PC-3 (cell line): ENCODE measurements at regions of chr7 and their contacts with region 1.

Region 1: DNA sequence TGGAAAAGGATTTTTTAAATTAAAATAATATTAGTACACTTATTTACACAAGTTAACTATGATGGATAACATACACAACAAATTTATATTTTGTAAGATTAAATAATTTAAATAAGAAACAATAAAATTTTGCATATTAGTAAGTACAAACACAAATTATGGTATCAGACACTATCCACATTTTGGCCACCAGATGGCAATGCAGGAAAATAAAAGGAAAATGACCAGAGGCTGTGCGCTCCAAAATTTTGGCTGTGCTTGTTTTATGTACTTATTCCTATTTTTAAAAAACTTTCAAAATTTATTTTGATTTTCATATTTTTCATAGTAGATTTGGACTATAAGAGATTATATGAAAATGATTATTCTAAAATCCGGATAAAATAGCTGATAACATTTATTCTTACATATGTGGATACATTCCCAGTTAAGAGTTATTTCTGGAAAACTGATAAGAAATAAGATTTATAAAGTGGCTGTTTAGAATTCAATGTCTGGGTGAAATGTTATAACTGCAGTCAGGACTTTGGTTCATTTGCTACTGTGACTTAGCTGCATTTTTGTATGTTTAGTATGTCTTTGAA is 274.7 kb upstream of the HGF start:
- DNase-seq: peak; percentile 66
- ATAC-seq: peak; percentile 45; the same call in 1 of the 2 replicates
- H3K4me3 ChIP-seq: no peak overlapping the region
- H3K27ac ChIP-seq: no peak overlapping the region
- H3K4me1 ChIP-seq: peaks cover 10% of the 10 kb centered on the region
- H3K27me3 ChIP-seq: no peaks in the 10 kb centered on the region
- CTCF ChIP-seq: peak; percentile 62

Region 2: DNA sequence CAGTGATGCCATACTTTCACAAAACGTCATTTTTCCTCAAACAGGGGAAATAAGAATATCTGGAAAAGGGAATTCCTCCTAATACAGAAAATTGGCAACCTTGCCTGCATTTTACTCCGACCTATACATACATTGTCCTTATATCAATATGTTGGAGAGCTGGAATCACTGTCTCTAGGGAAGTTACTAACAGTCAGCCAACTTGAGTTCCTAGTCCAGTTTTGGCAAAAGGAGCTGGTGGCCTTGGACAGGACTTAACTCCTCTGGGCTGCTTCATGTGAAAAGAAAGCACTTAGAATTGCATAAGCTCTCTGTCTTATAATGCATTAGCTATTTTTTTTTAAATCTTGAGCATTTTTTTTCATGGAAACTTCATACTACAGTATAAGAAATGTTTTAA is 100.5 kb before region 1 on chr7:
- CTCF ChIA-PET with region 1: no interaction called
- POLR2A ChIA-PET with region 1: no interaction called
- intact Hi-C with region 1: no loop called
- DNase-seq: no peak
- ATAC-seq: no peak
- H3K4me3 ChIP-seq: no peak overlapping the region
- H3K27ac ChIP-seq: no peak overlapping the region
- H3K4me1 ChIP-seq: no peaks in the 10 kb centered on the region
- H3K27me3 ChIP-seq: 0 out of 2 replicates have a peak, but pooled peaks cover 3% of the 10 kb centered on the region
- CTCF ChIP-seq: no peak

Region 3: DNA sequence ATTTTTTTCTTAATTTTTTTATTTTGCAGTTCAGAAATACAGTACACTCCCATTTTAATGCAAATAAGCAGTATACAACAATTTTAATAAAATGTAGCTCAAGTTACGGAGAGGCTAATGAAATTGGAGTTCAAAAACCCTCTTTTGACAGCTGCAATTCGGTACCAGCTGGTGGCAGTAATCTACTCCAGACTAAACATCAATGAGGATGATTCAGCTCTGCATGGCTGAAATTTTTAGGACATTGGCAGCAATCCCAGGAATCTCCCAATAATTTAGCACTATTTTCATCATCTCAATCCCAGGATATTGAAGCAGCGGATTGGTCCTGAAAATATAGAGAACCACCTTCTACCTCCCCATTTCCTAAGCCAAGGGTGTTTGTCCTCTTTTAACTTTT is 120.2 kb after region 1 on chr7:
- CTCF ChIA-PET with region 1: no interaction called
- POLR2A ChIA-PET with region 1: no interaction called
- intact Hi-C with region 1: loop called (anchors 2 kb)
- DNase-seq: peak; percentile 58
- ATAC-seq: peak; percentile 64
- H3K4me3 ChIP-seq: no peak overlapping the region
- H3K27ac ChIP-seq: no peak overlapping the region
- H3K4me1 ChIP-seq: no peaks in the 10 kb centered on the region
- H3K27me3 ChIP-seq: peaks cover 65% of the 10 kb centered on the region
- CTCF ChIP-seq: peak; percentile 59

Region 4: GRCh38 chr7:82234457-82235049 is 190.0 kb after region 1 on chr7:
- CTCF ChIA-PET with region 1: interaction called, 6 read pairs
- POLR2A ChIA-PET with region 1: no interaction called
- intact Hi-C with region 1: loop called (anchors 5 kb)
- DNase-seq: peak; percentile 60
- ATAC-seq: no peak
- H3K4me3 ChIP-seq: no peak overlapping the region
- H3K27ac ChIP-seq: no peak overlapping the region
- H3K4me1 ChIP-seq: no peaks in the 10 kb centered on the region
- H3K27me3 ChIP-seq: peaks cover 37% of the 10 kb centered on the region
- CTCF ChIP-seq: peak; percentile 77

Region 5: GRCh38 chr7:82275342-82275741 is 230.8 kb after region 1 on chr7:
- CTCF ChIA-PET with region 1: no interaction called
- POLR2A ChIA-PET with region 1: no interaction called
- intact Hi-C with region 1: no loop called
- DNase-seq: no peak
- ATAC-seq: no peak
- H3K4me3 ChIP-seq: no peak overlapping the region
- H3K27ac ChIP-seq: no peak overlapping the region
- H3K4me1 ChIP-seq: no peaks in the 10 kb centered on the region
- H3K27me3 ChIP-seq: 0 out of 2 replicates have a peak, but pooled peaks cover 9% of the 10 kb centered on the region
- CTCF ChIP-seq: no peak

Region 6: DNA sequence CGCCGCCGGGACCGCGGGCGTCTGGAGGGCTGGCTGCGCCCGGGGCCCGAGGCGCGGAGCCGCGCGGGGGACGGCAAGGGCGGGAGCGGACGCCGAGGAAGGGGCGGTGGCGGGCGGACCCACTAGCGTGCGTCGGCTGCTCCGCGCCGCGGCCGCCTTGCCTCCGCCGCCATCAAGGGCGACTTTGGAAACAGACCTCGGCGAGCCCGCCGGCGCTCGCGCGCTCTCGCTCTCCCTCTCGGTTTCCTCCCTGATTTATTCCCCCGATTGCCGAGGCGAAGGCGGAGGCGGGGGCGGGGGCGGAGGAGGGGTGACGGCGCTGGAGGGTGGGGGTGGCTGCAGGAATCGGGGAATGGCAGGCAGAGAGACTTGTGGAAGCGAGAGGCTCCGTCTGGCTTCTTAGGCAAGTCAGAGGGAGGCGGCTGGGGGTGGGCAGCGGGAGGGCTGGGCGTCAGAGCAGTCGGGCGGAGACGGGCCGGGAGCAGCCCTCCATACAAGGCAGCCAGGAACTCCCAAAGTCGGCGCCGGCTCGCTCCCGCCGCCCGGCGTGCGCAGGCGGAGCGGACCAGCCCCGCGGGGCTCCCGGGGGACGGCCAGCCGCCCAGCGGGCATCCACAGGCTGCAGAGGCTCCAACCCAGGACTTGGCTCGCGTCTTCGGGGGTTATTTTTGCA is 399.1 kb after region 1 on chr7 and contains the start of gene CACNA2D1:
- CTCF ChIA-PET with region 1: no interaction called
- POLR2A ChIA-PET with region 1: no interaction called
- intact Hi-C with region 1: loop called (anchors 10 kb)
- DNase-seq: peak; percentile 5
- ATAC-seq: peak; percentile 67
- H3K4me3 ChIP-seq: peak within 1 kb of the TSS; percentile 66
- H3K27ac ChIP-seq: no peak within 1 kb of the TSS
- H3K4me1 ChIP-seq: peaks cover 7% of the 10 kb centered on the region; the same call in 1 of the 2 replicates
- H3K27me3 ChIP-seq: peaks cover 68% of the 10 kb centered on the region
- CTCF ChIP-seq: no peak
- total RNA-seq, gene CACNA2D1: 0.77 and 1.1 TPM in 2 replicates

Region 7: DNA sequence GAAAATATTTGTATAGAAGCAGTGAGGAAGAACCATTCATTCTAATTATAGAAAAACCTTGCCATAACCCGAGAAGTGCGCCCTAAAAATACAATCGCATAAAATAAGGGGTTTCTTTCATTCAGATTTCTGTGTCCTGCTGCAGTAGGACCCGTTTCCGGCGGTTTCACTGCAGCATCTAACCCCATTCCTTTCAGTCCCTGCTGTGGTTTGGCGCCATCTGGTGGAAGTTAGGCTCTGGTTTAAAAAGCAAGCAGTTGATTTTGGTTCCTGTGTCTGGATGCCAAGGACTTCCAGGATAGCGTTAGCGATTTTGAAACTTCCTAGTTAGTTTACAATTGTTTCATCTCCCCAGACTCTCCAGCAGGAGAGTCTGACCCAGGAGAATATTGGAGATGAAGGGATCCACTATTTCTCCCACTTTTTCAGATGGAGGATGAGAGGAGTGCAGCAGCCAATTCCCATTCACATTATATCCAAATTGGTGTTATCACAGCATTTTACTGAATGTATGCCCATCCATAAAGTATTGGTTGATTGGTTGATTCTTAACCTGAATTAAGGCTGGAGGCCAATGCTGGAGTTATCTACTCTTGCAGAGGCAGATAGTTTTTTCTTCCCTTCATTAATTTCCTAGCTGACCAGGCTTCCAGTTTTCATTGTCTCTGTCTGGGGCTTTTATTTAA is 527.7 kb after region 1 on chr7:
- CTCF ChIA-PET with region 1: no interaction called
- POLR2A ChIA-PET with region 1: no interaction called
- intact Hi-C with region 1: loop called (anchors 1 kb)
- DNase-seq: peak; percentile 86
- ATAC-seq: peak; percentile 91
- H3K4me3 ChIP-seq: no peak overlapping the region; the same call in 1 of the 2 replicates
- H3K27ac ChIP-seq: no peak overlapping the region
- H3K4me1 ChIP-seq: no peaks in the 10 kb centered on the region
- H3K27me3 ChIP-seq: peaks cover 25% of the 10 kb centered on the region
- CTCF ChIP-seq: peak; percentile 90